ENCODE measurements at regions of chr5 and their contacts with region 1.

Region 1: DNA sequence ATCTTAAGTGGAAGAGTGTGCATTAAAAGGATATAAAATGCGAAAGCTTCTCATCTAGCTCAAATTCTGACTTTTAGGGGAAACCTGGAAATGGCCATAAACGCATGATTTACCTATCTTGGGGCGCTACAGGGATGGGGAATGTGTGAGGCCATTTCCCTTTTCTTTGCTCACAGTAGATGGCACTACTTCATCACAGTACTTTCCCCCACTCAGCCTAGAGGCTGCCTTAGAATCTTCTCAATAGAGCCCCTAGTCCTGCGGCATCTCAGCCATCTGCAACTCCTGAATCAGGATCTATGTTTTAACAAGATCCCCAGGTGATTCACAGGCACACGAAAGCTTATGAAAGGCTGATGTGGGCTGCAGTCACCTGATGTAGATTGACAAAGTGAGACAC is 110.8 kb downstream of the LHFPL2 start:
- DNase-seq: peak; percentile 65
- ATAC-seq: peak; percentile 75
- H3K4me3 ChIP-seq: no peak overlapping the region
- H3K4me3 Mint-ChIP-seq: no peak overlapping the region
- H3K27ac ChIP-seq: no peak overlapping the region
- H3K27ac Mint-ChIP-seq: no peak overlapping the region
- H3K4me1 ChIP-seq: peaks cover 0 to 3% of the 10 kb centered on the region in 2 donors
- H3K4me1 Mint-ChIP-seq: peaks cover 6% of the 10 kb centered on the region
- H3K27me3 ChIP-seq: no peaks in the 10 kb centered on the region
- H3K27me3 Mint-ChIP-seq: no peaks in the 10 kb centered on the region
- CTCF ChIP-seq: peak; percentile 63

Region 2: DNA sequence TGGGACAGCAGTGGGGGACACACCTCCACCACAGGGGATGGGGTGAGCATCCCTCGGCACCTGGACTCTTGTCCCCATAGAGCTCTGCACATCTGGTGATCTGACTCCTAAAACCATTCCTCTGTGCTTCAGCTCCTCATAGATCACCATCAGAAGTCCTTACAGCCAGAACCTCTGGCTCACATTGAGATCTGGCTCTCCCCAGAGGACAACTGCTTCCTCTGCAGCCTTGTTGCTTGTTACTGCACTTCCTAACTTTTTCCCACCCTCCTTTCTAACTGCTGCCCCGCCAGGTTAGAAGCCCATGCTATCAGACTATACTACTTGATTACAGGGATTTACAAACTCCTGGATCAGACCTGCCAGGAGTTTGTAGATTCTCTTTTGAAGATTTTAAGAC is 382.8 kb after region 1 on chr5:
- CTCF ChIA-PET with region 1: interaction called, 10 read pairs
- POLR2A ChIA-PET with region 1: no interaction called
- intact Hi-C with region 1: no loop called
- DNase-seq: peak; percentile 26
- ATAC-seq: no peak
- H3K4me3 ChIP-seq: no peak overlapping the region
- H3K4me3 Mint-ChIP-seq: no peak overlapping the region
- H3K27ac ChIP-seq: no peak overlapping the region
- H3K27ac Mint-ChIP-seq: no peak overlapping the region
- H3K4me1 ChIP-seq: no peaks in the 10 kb centered on the region
- H3K4me1 Mint-ChIP-seq: peaks cover 5% of the 10 kb centered on the region
- H3K27me3 ChIP-seq: no peaks in the 10 kb centered on the region
- H3K27me3 Mint-ChIP-seq: no peaks in the 10 kb centered on the region
- CTCF ChIP-seq: no peak

Measured in B cell (primary cell).